Naive thymus-derived CD4-positive, alpha-beta T cell (primary cell): ENCODE measurements at regions of chr17 and their contacts with region 1.

Region 1: DNA sequence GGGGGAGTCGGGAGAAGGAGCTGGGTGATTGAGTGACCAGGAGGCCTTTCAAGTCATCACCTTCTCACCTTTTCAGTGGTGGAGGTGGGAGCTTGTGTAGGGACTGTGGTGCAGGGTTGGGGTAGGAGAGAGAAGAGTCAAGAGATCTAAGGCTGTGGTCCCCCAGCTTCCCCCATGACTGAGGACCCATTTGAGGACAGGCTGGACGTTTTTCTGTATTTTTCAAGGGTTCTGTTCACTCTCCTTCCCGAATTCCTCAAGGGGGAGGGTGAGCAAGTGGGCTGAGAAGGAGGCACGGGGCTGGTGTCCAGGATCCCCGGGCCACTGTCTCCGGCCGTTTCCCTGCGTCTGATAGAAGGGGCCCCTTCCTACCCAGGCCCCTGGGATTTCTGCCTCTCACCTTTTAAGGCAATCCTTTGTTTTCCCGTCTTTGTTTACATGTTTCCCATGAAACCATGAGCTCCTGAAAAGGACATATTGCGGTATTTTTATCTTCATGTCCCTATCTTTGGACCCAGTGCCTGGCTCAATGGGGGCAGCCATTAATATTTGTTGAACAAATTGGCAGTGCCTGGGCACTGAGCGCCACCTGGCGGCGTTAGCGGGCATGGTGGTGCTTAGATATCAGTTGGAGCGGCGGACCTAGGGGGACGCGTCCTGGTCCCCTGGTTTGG is 9.2 kb upstream of the CD300A start:
- DNase-seq: peak; percentile 22 to 72 (median 50)
- ATAC-seq: peak; percentile 68
- H3K4me3 ChIP-seq: no peak overlapping the region
- H3K4me3 Mint-ChIP-seq: peak overlapping the region in 3 of 10 donors; percentile 17 to 30 (median 25)
- H3K27ac ChIP-seq: no peak overlapping the region
- H3K27ac Mint-ChIP-seq: peak overlapping the region in 3 of 9 donors; percentile 18 to 65 (median 30)
- H3K4me1 ChIP-seq: peaks cover 5 to 52% of the 10 kb centered on the region in 2 donors
- H3K4me1 Mint-ChIP-seq: peaks cover 0 to 43% (median 12%) of the 10 kb centered on the region in 7 donors
- H3K27me3 ChIP-seq: no peaks in the 10 kb centered on the region
- H3K27me3 Mint-ChIP-seq: peaks cover 0 to 19% (median 0%) of the 10 kb centered on the region in 5 donors

Region 2: GRCh38 chr17:74203439-74204240 is 253.6 kb before region 1 on chr17 and contains the start of gene RPL38:
- CTCF ChIA-PET with region 1: interaction called, 3 read pairs
- POLR2A ChIA-PET with region 1: no interaction called
- intact Hi-C with region 1: loop called in 1 of 2 experiments (anchors 1 kb)
- DNase-seq: peak; percentile 83 to 95 (median 94)
- ATAC-seq: peak; percentile 98
- H3K4me3 ChIP-seq: peak within 1 kb of the TSS; percentile 89
- H3K4me3 Mint-ChIP-seq: peak within 1 kb of the TSS; percentile 85 to 100 (median 98)
- H3K27ac ChIP-seq: peak within 1 kb of the TSS; percentile 86
- H3K27ac Mint-ChIP-seq: peak within 1 kb of the TSS; percentile 89 to 98 (median 96)
- H3K4me1 ChIP-seq: peaks cover 16 to 20% of the 10 kb centered on the region in 2 donors
- H3K4me1 Mint-ChIP-seq: peaks cover 24 to 49% (median 34%) of the 10 kb centered on the region in 7 donors
- H3K27me3 ChIP-seq: peaks cover 0 to 5% of the 10 kb centered on the region in 2 donors
- H3K27me3 Mint-ChIP-seq: peaks cover 8 to 16% (median 11%) of the 10 kb centered on the region in 5 donors
- total RNA-seq, gene RPL38: 1,097 to 2,553 (median 2,002) TPM

Region 3: DNA sequence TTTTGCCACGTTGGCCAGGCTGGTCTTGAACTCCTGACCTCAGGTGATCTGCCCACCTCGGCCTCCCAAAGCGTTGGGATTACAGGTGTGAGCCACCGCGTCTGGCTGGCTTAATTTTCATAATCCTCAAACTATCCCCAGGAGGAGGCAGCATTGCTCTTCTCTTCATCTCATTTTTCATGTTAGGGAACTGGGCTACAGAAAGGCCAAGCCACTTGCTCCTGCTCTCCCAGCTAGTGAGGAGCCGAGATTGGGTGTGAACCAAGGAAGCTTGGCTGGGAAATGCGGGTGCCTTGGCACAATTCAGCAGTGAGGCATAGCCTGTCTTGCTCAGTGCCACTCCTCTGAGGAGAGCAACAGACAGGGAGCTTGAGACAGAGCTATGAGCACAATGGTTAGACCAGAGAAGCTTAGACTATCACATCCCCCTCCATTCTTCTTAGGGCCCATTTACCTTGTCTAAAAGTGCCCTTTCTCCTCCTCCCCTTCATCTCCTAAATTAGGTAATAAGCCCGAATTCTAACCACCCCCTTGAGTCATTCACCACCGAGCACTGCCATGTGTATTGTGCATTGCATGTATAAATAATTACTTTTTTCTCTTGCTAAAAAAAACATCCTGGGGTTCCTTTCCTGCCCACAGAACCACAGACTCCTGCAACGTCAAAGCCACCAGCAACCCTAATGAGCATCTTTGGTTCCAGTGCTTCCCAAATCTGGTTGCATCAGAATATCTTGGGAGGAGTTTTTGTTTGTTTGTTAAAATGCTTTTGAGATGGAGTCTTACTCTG is 151.2 kb before region 1 on chr17:
- CTCF ChIA-PET with region 1: interaction called, 3 read pairs
- POLR2A ChIA-PET with region 1: no interaction called
- intact Hi-C with region 1: loop called (anchors 1 to 10 kb)
- DNase-seq: no peak
- ATAC-seq: no peak
- H3K4me3 ChIP-seq: no peak overlapping the region
- H3K4me3 Mint-ChIP-seq: no peak overlapping the region
- H3K27ac ChIP-seq: no peak overlapping the region
- H3K27ac Mint-ChIP-seq: no peak overlapping the region
- H3K4me1 ChIP-seq: peaks cover 0 to 4% of the 10 kb centered on the region in 2 donors
- H3K4me1 Mint-ChIP-seq: peaks cover 0 to 19% (median 6%) of the 10 kb centered on the region in 7 donors
- H3K27me3 ChIP-seq: no peaks in the 10 kb centered on the region
- H3K27me3 Mint-ChIP-seq: peaks cover 0 to 8% (median 0%) of the 10 kb centered on the region in 5 donors

Region 4: DNA sequence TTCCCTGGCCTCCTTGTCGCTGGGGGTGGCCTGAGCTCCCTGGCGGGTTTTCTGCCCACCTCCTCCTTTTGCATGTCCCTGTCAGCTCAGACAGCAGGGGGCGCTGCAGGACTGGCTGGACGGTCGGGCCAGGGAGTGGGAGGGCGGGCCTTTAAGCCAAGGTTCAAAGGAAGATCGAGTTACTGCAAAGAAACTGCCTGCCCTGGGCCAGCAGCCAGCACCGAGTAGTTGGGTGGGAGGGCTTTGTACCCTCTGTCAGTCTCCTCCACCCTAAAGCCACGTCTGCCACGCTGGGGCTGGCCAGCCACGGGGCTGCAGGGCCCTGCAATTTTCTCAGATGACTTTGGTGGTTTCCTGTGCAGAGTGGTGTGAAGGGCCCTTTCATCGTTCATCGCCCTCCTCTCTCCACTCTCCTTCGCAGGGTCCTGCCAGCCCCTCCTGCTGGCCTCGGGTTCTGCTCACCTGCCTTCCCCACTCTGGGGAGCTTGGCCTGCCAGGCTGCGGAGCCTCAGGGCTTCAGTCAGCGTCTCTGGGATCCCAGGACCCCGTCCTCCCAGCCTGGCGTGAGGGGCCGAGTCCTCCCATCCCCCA is 77.7 kb before region 1 on chr17:
- CTCF ChIA-PET with region 1: interaction called, 7 read pairs
- POLR2A ChIA-PET with region 1: no interaction called
- intact Hi-C with region 1: loop called (anchors 1 kb)
- DNase-seq: peak; percentile 70 to 94 (median 85)
- ATAC-seq: peak; percentile 95
- H3K4me3 ChIP-seq: peak overlapping the region; percentile 19
- H3K4me3 Mint-ChIP-seq: peak overlapping the region in 1 of 10 donors; percentile 7
- H3K27ac ChIP-seq: no peak overlapping the region
- H3K27ac Mint-ChIP-seq: peak overlapping the region in 1 of 9 donors; percentile 41
- H3K4me1 ChIP-seq: peaks cover 8 to 10% of the 10 kb centered on the region in 2 donors
- H3K4me1 Mint-ChIP-seq: peaks cover 0 to 7% (median 0%) of the 10 kb centered on the region in 7 donors
- H3K27me3 ChIP-seq: no peaks in the 10 kb centered on the region
- H3K27me3 Mint-ChIP-seq: peaks cover 0 to 18% (median 0%) of the 10 kb centered on the region in 5 donors

Region 5: GRCh38 chr17:74478420-74479100 is 21.3 kb after region 1 on chr17:
- CTCF ChIA-PET with region 1: interaction called, 12 read pairs
- POLR2A ChIA-PET with region 1: no interaction called
- intact Hi-C with region 1: no loop called
- DNase-seq: peak in 5 of 9 donors; percentile 16 to 58 (median 52)
- ATAC-seq: peak; percentile 79
- H3K4me3 ChIP-seq: peak overlapping the region; percentile 25
- H3K4me3 Mint-ChIP-seq: peak overlapping the region; percentile 20 to 79 (median 64)
- H3K27ac ChIP-seq: peak overlapping the region; percentile 3
- H3K27ac Mint-ChIP-seq: peak overlapping the region; percentile 66 to 92 (median 79)
- H3K4me1 ChIP-seq: peaks cover 42 to 57% of the 10 kb centered on the region in 2 donors
- H3K4me1 Mint-ChIP-seq: peaks cover 34 to 75% (median 56%) of the 10 kb centered on the region in 7 donors
- H3K27me3 ChIP-seq: no peaks in the 10 kb centered on the region
- H3K27me3 Mint-ChIP-seq: no peaks in the 10 kb centered on the region